ENCODE measurements at regions of chr2 and their contacts with region 1.

Region 1: DNA sequence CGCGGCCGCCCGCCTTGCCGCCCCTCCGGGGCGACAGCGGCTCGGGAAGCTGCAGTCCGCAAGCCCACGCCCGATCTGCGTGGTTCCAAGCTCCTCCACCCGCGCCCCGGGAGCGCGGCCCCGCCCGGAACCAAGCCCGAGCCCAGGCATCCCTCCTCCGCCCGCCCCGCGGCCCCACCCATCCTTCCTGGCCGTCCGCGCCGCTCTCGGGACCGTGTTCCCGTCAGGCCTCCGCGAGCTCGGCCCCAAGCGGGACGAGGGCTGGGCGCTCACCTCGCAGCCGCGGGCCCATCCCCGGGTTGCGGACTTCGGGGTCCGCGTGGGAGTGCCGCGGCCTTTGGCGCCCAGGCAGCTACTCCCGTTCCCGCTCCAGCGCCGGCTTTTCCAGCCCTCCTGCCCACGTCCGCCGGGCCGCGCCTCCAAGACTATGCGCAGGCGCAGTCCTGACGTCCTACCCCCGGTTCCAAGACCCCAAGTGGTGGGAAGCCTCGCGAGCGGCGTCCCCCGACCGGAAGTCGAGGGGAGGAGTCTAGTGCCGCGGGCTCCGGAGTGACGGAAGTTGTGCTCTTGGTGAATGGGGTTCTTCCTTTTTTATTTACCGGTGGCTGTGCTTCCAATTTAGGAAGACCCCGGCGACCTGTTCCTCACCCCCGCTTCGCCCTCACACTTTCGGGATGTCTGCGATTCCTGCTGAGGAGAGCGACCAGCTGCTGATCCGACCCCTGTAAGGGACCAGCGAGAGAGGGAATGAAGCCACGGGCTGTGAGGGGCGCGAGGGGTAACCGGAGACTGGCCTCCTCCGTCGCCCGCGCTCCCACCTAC is at the starts of genes CPSF3 and ITGB1BP1:
- DNase-seq: peak; percentile 96
- H3K4me3 Mint-ChIP-seq: peak within 1 kb of the TSS; percentile 92
- H3K27ac Mint-ChIP-seq: peak within 1 kb of the TSS; percentile 92
- H3K4me1 Mint-ChIP-seq: peaks cover 39% of the 10 kb centered on the region
- H3K27me3 Mint-ChIP-seq: no peaks in the 10 kb centered on the region
- total RNA-seq, gene CPSF3: 74.3 and 74.7 TPM in 2 replicates
- total RNA-seq, gene ITGB1BP1: 115 and 119 TPM in 2 replicates

Region 2: GRCh38 chr2:9003616-9004337 is 419.5 kb before region 1 on chr2 and contains the start of gene MBOAT2:
- intact Hi-C with region 1: loop called (anchors 5 kb)
- DNase-seq: peak; percentile 79
- H3K4me3 Mint-ChIP-seq: peak within 1 kb of the TSS; percentile 84
- H3K27ac Mint-ChIP-seq: peak within 1 kb of the TSS; percentile 65
- H3K4me1 Mint-ChIP-seq: peaks cover 23% of the 10 kb centered on the region
- H3K27me3 Mint-ChIP-seq: peaks cover 19% of the 10 kb centered on the region
- total RNA-seq, gene MBOAT2: 2.9 and 4.5 TPM in 2 replicates

Region 3: DNA sequence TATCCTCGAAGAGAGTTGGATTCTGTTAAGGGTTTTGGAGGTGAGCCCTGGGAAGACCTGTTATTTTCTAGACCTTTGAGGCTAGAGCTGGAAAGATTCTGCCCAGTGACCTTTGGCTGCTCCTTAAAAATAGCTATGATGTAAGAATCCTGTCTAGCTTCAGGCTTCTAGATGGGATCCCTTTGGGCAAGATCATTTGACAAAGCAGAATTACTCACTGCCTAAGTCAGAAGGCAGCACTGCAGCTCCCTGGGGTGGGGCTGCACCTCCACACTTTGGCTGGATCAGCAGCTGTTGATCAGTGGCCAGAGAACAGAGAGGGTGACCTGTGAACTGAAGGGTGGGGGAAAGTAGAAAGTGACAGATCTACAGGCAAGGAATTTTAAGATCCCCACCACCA is 112.9 kb before region 1 on chr2:
- intact Hi-C with region 1: no loop called
- DNase-seq: no peak
- H3K4me3 Mint-ChIP-seq: no peak overlapping the region
- H3K27ac Mint-ChIP-seq: no peak overlapping the region
- H3K4me1 Mint-ChIP-seq: peaks cover 7% of the 10 kb centered on the region
- H3K27me3 Mint-ChIP-seq: peaks cover 3% of the 10 kb centered on the region

Region 4: DNA sequence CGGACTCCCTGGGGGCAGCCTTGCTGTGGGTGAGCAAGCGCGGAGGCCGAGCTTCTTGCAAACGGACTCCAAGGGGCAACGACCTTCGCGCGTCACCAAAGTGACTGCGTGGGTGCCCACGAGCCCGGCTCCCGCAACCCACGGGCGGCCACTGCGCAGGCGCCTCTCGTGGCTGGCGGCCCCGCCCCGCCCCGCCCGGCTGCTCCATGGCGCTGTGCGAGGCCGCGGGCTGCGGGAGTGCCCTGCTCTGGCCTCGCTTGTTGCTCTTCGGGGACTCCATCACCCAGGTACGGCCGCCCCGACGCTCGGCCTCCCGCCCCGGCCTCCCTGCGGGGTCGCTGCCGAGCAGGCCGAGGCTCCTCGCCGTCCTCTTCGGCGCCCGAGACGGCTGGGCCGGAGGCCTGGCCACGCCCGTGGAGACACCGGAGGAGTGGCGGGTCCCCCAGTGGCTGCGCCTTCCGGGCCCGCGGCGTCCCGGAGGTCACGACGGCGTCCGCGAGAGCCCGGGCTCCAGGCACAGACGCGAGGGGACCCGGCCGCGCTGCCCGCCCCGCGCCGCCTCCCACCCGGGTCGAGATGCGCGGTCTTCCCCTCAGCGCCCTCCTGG is 51.2 kb after region 1 on chr2 and contains the start of gene IAH1:
- intact Hi-C with region 1: loop called (anchors 1 kb)
- DNase-seq: peak; percentile 70
- H3K4me3 Mint-ChIP-seq: peak within 1 kb of the TSS; percentile 84
- H3K27ac Mint-ChIP-seq: peak within 1 kb of the TSS; percentile 84
- H3K4me1 Mint-ChIP-seq: peaks cover 48% of the 10 kb centered on the region
- H3K27me3 Mint-ChIP-seq: no peaks in the 10 kb centered on the region
- total RNA-seq, gene IAH1: 78.6 and 89.3 TPM in 2 replicates

Region 5: GRCh38 chr2:9681427-9681817 is 258.1 kb after region 1 on chr2:
- intact Hi-C with region 1: no loop called
- DNase-seq: peak; percentile 38
- H3K4me3 Mint-ChIP-seq: no peak overlapping the region
- H3K27ac Mint-ChIP-seq: peak overlapping the region; percentile 52
- H3K4me1 Mint-ChIP-seq: peaks cover 17% of the 10 kb centered on the region
- H3K27me3 Mint-ChIP-seq: peaks cover 2% of the 10 kb centered on the region

Region 6: DNA sequence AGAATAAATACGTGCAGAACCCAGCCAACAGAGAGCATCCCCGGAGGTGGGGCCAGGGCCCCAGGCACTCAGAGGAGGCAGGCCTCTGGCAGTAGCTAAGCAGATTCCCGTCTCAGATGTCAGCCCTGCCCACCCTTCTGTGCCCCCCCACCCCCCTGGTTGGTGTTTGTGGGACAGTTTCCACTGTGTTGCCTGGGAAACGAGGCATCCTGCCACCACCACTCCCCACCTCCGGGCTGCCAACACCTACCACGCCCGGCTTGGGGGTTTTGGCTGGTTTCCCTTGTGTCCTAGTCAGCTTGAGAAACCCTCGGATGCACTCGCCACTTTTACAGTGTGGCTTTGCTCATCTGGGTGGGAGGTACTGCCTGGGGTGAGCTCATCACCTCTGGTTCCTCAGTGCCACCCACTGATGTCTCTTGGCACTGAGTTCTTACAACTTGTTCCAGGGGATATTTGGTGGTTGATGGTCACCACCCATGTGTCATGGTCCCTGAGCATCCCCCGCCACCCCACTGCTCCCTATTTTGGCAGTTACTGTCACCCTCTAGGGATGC is 279.9 kb after region 1 on chr2:
- intact Hi-C with region 1: loop called (anchors 2 kb)
- DNase-seq: peak; percentile 79
- H3K4me3 Mint-ChIP-seq: no peak overlapping the region
- H3K27ac Mint-ChIP-seq: peak overlapping the region; percentile 74
- H3K4me1 Mint-ChIP-seq: peaks cover 48% of the 10 kb centered on the region
- H3K27me3 Mint-ChIP-seq: no peaks in the 10 kb centered on the region

Region 7: DNA sequence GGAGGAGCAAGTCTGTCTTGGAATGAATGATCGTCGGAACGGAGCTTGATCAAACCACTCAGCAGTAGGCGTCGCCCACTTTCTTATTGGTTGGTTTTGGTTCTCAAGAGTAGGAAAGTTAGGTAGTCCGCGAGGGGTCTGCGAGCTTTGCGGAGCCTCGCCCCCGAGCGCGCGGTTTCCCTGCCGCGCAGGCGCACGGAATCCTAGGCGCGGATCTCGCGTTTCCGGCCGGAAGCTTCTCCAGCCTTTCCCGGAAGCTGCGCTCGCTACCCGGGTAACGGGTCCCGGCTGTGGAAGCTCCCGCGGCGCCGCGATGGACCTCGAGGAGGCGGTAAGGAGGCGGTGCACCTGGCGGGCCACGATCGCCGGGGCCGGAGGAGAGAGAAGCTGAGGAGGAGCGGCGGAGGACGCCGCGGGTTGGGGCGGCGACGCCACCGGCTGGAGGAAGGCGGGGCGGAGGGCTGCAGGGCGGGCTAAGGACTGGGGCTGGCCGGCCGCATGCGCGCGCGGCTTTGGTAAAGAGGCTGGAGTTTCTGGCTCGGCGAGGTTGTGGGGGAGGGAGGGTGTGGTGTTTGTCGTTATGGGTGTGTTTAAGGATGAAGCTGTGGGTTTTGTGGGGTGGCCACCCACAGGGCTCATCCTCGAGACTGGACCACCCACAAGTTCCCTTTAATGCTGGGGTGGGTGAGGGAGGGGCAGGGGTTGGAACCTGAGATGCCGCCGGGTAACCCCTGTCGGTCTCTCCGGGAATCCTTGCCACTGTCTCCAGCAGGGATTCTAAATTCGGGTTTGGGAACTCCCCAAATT is 420.1 kb after region 1 on chr2 and contains the start of gene TAF1B:
- intact Hi-C with region 1: loop called (anchors 2 kb)
- DNase-seq: peak; percentile 87
- H3K4me3 Mint-ChIP-seq: peak within 1 kb of the TSS; percentile 91
- H3K27ac Mint-ChIP-seq: peak within 1 kb of the TSS; percentile 93
- H3K4me1 Mint-ChIP-seq: peaks cover 46% of the 10 kb centered on the region
- H3K27me3 Mint-ChIP-seq: no peaks in the 10 kb centered on the region
- total RNA-seq, gene TAF1B: 23.3 and 25.1 TPM in 2 replicates

Region 8: DNA sequence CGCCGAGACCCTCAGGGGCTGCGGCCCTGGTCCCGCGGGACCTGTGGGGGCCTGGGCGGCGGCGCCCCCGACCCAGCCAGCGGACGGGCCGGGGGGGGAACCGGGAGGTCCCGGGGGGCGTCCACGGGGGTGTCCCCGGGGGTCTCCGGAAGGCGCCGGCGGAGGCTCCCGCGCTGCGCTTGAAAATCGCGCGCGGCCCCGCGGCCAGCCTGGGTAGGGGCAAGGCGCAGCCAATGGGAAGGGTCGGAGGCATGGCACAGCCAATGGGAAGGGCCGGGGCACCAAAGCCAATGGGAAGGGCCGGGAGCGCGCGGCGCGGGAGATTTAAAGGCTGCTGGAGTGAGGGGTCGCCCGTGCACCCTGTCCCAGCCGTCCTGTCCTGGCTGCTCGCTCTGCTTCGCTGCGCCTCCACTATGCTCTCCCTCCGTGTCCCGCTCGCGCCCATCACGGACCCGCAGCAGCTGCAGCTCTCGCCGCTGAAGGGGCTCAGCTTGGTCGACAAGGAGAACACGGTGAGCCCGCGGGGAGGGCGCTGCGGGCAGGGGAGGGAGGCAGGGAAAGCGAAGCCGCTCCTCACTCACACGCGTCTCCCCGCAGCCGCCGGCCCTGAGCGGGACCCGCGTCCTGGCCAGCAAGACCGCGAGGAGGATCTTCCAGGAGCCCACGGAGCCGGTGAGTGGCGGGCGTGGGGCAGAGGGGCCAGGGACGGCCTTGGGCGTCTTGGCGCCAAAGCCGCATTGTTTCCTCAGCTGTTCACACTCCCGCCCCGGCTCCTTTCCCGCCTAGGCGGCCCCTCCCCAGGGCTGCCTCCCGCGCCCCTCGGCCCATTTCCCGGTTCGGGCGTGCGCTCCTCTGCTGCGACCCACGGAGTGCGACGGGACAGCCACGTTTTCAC is 699.3 kb after region 1 on chr2 and contains the start of gene RRM2:
- intact Hi-C with region 1: loop called (anchors 2 kb)
- DNase-seq: peak; percentile 92
- H3K4me3 Mint-ChIP-seq: peak within 1 kb of the TSS; percentile 99
- H3K27ac Mint-ChIP-seq: peak within 1 kb of the TSS; percentile 100
- H3K4me1 Mint-ChIP-seq: peaks cover 64% of the 10 kb centered on the region
- H3K27me3 Mint-ChIP-seq: no peaks in the 10 kb centered on the region
- total RNA-seq, gene RRM2: 328 and 351 TPM in 2 replicates

Region 9: DNA sequence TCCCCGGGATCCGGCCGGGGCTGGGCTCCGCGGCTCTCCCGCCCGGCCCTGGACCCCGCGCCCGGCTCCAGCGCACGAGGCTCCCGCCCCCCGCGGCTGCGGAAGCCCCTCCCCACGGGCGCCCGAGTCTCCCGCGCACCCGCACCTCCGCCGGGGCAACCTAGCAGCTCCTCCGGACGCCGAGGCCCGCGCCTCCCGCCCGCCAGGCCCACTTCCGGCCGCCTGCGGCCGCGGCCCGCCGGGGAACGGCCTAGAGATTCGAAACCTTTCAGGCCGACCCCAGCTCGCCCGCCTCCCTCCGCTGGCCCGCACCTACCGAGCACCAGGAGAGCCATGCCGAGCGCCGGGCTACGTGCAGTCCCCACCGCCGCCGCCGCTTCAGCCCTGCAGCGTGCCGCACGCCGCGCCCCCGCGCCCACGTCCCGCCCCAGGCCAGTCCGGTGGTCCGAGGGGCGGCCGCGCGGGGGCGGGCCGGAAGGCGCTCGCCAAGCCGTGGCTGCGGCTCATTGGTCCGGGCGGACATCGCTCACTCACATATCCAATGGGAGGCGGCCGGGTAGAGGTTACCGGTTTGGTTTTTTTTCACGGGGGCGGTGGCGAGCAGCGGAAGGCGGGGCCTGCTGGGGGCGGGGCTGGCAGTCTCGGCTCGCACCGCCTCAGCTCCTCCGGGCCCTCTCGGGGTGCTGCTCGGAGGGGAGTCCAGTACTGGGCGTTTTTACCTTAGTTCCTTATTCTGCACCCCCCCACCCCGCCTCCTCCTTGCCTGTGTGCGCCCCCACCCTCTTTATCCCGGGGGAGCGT is 1389.3 kb after region 1 on chr2 and contains the start of gene PDIA6:
- intact Hi-C with region 1: loop called (anchors 5 kb)
- DNase-seq: peak; percentile 95
- H3K4me3 Mint-ChIP-seq: peak within 1 kb of the TSS; percentile 92
- H3K27ac Mint-ChIP-seq: peak within 1 kb of the TSS; percentile 91
- H3K4me1 Mint-ChIP-seq: peaks cover 31% of the 10 kb centered on the region
- H3K27me3 Mint-ChIP-seq: peaks cover 13% of the 10 kb centered on the region
- total RNA-seq, gene PDIA6: 171 and 173 TPM in 2 replicates